Head of caudate nucleus (tissue), 42 donors: ENCODE measurements at regions of chr20 and their contacts with region 1.

Region 1: GRCh38 chr20:16573001-16573965 is at the start of gene KIF16B:
- DNase-seq: peak; percentile 74 to 96 (median 91)

Region 2: DNA sequence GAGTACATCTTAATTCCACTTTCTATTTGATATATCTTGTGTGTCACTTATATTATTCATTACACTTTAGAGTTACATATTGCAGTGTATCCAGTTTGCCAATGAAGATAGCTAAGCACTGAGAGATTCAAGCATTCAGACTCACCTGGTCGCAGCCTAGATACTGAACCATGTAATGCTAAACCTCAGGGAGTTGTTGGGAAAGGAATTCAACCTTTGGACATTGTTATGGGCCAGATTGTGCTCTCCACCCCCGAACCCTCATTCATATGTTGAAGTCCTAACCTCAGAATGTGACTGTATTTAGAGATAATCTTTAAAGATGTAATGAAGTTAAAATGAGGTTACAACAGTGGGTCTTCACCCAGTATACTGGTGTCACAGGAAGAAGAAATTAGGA is 13.8 kb after region 1 on chr20:
- intact Hi-C with region 1: loop called (anchors 2 kb)
- DNase-seq: no peak

Region 3: DNA sequence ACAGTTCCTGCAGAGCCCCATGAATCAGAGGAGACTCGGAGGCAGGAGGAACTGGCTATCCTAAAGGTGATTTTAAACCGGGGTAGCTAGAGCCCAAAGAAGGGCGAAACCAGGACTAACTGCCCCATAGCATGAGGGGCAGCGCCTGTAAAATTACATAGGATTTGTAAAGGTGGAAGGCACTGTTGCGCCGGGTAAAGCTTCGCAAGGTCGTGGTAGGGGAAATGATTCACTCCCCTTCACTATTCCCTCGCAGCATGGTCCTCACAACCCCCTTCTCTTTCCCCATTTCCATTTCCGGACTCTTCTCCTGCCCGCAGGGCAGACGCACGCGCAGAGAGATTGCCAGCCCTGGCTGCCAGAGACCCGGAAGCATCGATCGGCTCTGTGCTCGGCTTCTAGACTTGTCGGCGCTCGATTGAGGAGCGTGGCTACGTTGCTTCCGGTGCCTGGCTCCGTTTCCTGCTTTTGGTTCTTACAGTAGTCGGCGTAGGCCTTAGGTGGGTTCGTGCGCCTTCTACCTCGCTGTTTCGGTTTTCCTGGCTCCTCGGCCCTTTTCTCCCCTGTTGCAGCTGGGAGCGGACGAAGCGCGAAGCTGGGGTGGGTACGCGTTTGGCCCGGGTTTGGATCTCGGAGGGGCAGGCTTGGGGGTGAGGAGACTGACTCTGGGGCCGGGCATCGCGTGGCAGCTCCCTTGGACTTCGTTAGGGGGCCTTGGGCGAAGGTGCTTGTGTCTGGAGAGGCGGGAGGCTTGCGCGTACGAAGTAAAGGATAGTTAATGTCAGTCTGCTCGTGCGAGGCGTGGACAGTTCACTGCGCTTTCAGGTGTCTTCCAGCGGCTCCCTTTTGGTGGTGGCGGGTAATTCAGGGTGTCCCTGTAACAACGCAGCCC is 156.5 kb after region 1 on chr20 and contains the start of gene SNRPB2:
- intact Hi-C with region 1: loop called (anchors 10 kb)
- DNase-seq: peak; percentile 92 to 98 (median 95)

Region 4: DNA sequence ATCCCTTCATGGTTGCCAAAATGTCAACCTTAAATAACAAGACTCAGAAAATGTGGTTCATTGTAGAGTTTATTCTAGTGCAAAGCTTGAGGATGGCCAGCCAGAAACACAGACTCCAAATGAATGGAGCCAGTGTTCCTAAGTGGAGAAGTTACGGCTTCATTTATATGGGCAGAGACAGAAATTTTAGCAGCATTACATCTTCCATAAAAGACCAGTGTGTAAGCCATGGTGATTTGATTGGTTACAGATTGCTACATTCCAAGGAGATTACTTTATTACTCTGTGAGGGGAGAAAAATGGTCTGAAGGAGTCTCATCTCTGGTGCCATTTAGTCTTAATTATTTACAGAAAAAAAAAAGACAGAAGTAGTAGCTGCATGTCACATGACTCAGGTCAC is 272.7 kb after region 1 on chr20:
- intact Hi-C with region 1: no loop called
- DNase-seq: no peak